ENCODE measurements at regions of chr19 and their contacts with region 1.

Region 1: GRCh38 chr19:37519890-37520289 is 13.2 kb downstream of the ZNF793 start:
- DNase-seq: peak; percentile 10
- ATAC-seq: peak; percentile 69
- H3K4me3 Mint-ChIP-seq: no peak overlapping the region
- H3K27ac Mint-ChIP-seq: no peak overlapping the region
- H3K4me1 Mint-ChIP-seq: no peaks in the 10 kb centered on the region
- H3K27me3 Mint-ChIP-seq: no peaks in the 10 kb centered on the region

Region 2: GRCh38 chr19:37472165-37472564 is 47.7 kb before region 1 on chr19:
- CTCF ChIA-PET with region 1: no interaction called
- POLR2A ChIA-PET with region 1: interaction called, 10 read pairs
- intact Hi-C with region 1: no loop called
- DNase-seq: no peak
- ATAC-seq: no peak
- H3K4me3 Mint-ChIP-seq: no peak overlapping the region
- H3K27ac Mint-ChIP-seq: no peak overlapping the region
- H3K4me1 Mint-ChIP-seq: peaks cover 21% of the 10 kb centered on the region
- H3K27me3 Mint-ChIP-seq: no peaks in the 10 kb centered on the region

Measured in activated CD4-positive, alpha-beta T cell treated with anti-CD3 and anti-CD28 coated beads for 36 hours (primary cell).